Adrenal gland (tissue), 19 donors: ENCODE measurements at regions of chr4 and their contacts with region 1.

Region 1: GRCh38 chr4:121736735-121737351 is 28.1 kb downstream of the SMIM43 start:
- DNase-seq: peak in 5 of 7 donors; percentile 37 to 67 (median 44)
- H3K4me3 ChIP-seq: no peak overlapping the region
- H3K27ac ChIP-seq: no peak overlapping the region
- H3K4me1 ChIP-seq: no peaks in the 10 kb centered on the region
- H3K27me3 ChIP-seq: no peaks in the 10 kb centered on the region
- CTCF ChIP-seq: peak; percentile 23 to 59 (median 57)
- POLR2A ChIP-seq: no peak

Region 2: DNA sequence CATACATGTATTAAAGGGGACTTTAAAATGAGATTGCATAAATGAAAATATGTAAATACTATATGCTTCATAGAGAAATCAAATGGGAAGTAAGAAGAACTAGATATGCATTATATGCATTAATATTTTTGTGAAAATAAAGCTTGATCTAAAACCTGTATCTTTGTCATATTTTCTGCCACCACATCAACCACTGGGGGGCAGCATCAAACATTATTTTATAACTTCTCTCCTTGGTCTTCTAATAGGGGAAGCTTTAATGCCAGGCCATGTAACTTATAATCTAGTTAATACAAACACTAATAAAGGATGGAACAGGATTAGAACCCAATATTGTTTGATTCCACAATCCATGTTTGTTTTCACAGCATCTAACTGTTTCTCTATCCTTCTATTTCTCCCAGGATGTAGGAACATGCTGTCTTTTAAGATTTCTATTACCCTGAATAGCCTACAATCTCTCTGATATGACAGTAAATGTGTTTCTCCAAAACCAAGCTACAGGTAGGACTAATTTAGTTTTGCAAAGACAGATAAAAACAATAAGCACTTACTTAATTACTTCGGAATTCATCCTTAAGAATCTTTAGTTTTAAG is 366.0 kb before region 1 on chr4:
- intact Hi-C with region 1: loop called in 1 of 2 experiments (anchors 5 kb)
- DNase-seq: peak in 6 of 7 donors; percentile 43 to 72 (median 60)
- H3K4me3 ChIP-seq: no peak overlapping the region
- H3K27ac ChIP-seq: no peak overlapping the region
- H3K4me1 ChIP-seq: no peaks in the 10 kb centered on the region
- H3K27me3 ChIP-seq: no peaks in the 10 kb centered on the region
- CTCF ChIP-seq: peak; percentile 44 to 72 (median 54)
- POLR2A ChIP-seq: no peak